ENCODE measurements at regions of chr9 and their contacts with region 1.

Region 1: DNA sequence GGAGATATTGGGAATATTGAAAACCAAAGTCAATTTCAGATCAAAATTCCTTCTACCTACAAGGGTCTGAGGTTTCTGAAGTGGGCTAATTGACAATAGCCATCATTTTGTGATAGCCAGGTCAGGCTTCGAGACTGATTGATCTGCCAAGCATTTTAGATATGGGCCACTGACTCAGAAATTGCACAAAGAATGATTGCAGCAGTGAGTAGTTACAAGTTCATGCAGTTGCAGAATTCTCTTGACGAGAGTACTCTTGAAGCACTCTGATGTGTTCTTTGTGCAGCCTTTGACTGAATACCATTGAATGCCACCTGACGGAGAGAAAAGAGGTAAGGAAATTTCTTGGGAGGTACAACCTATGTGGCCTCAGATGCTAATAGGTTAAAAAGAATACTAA is 8.3 kb downstream of the C9orf57 start:
- DNase-seq: no peak
- H3K4me3 ChIP-seq: no peak overlapping the region
- H3K27ac ChIP-seq: no peak overlapping the region
- H3K4me1 ChIP-seq: no peaks in the 10 kb centered on the region
- H3K27me3 ChIP-seq: no peaks in the 10 kb centered on the region
- CTCF ChIP-seq: no peak
- EP300 ChIP-seq: no peak
- POLR2A ChIP-seq: no peak

Region 2: GRCh38 chr9:71916834-71917534 is 135.1 kb before region 1 on chr9:
- in situ Hi-C with region 1: no loop called
- intact Hi-C with region 1: no loop called
- DNase-seq: peak; percentile 50
- H3K4me3 ChIP-seq: no peak overlapping the region
- H3K27ac ChIP-seq: peak overlapping the region; percentile 2 to 49 (median 16)
- H3K4me1 ChIP-seq: peaks cover 8 to 39% (median 17%) of the 10 kb centered on the region in 4 donors
- H3K27me3 ChIP-seq: no peaks in the 10 kb centered on the region
- CTCF ChIP-seq: no peak
- EP300 ChIP-seq: no peak
- POLR2A ChIP-seq: no peak

Region 3: GRCh38 chr9:72006501-72006900 is 45.6 kb before region 1 on chr9:
- in situ Hi-C with region 1: loop called in 1 of 4 experiments (anchors 10 kb)
- intact Hi-C with region 1: no loop called
- DNase-seq: no peak
- H3K4me3 ChIP-seq: no peak overlapping the region
- H3K27ac ChIP-seq: no peak overlapping the region
- H3K4me1 ChIP-seq: no peaks in the 10 kb centered on the region
- H3K27me3 ChIP-seq: no peaks in the 10 kb centered on the region
- CTCF ChIP-seq: no peak
- EP300 ChIP-seq: no peak
- POLR2A ChIP-seq: no peak

Measured in transverse colon (tissue), 4 donors.